Caco-2 (cell line): ENCODE measurements at regions of chr12 and their contacts with region 1.

Region 1: GRCh38 chr12:115456946-115457689 is 773.1 kb upstream of the TBX3 start:
- DNase-seq: peak; percentile 45 to 68
- H3K4me3 ChIP-seq: no peak overlapping the region
- H3K4me3 Mint-ChIP-seq: no peak overlapping the region
- H3K27ac Mint-ChIP-seq: no peak overlapping the region
- H3K4me1 ChIP-seq: 0 out of 2 replicates have a peak, but pooled peaks cover 12% of the 10 kb centered on the region
- H3K4me1 Mint-ChIP-seq: peaks cover 12% of the 10 kb centered on the region
- H3K27me3 ChIP-seq: no peaks in the 10 kb centered on the region
- H3K27me3 Mint-ChIP-seq: no peaks in the 10 kb centered on the region
- CTCF ChIP-seq: peak in 1 of 2 experiments; percentile 38

Region 2: GRCh38 chr12:115362339-115362976 is 94.7 kb before region 1 on chr12:
- CTCF ChIA-PET with region 1: no interaction called
- POLR2A ChIA-PET with region 1: no interaction called
- intact Hi-C with region 1: no loop called
- DNase-seq: no peak
- H3K4me3 ChIP-seq: no peak overlapping the region
- H3K4me3 Mint-ChIP-seq: no peak overlapping the region
- H3K27ac Mint-ChIP-seq: no peak overlapping the region
- H3K4me1 ChIP-seq: 0 out of 2 replicates have a peak, but pooled peaks cover 2% of the 10 kb centered on the region
- H3K4me1 Mint-ChIP-seq: no peaks in the 10 kb centered on the region
- H3K27me3 ChIP-seq: no peaks in the 10 kb centered on the region
- H3K27me3 Mint-ChIP-seq: no peaks in the 10 kb centered on the region
- CTCF ChIP-seq: peak in 1 of 2 experiments; percentile 3

Region 3: GRCh38 chr12:115474539-115475353 is 17.6 kb after region 1 on chr12:
- CTCF ChIA-PET with region 1: interaction called, 4 read pairs
- POLR2A ChIA-PET with region 1: no interaction called
- intact Hi-C with region 1: loop called (anchors 2 kb)
- DNase-seq: peak; percentile 72 to 93
- H3K4me3 ChIP-seq: no peak overlapping the region
- H3K4me3 Mint-ChIP-seq: peak overlapping the region; percentile 28
- H3K27ac Mint-ChIP-seq: no peak overlapping the region
- H3K4me1 ChIP-seq: peaks cover 28% of the 10 kb centered on the region
- H3K4me1 Mint-ChIP-seq: peaks cover 15% of the 10 kb centered on the region
- H3K27me3 ChIP-seq: no peaks in the 10 kb centered on the region
- H3K27me3 Mint-ChIP-seq: no peaks in the 10 kb centered on the region
- CTCF ChIP-seq: no peak

Region 4: DNA sequence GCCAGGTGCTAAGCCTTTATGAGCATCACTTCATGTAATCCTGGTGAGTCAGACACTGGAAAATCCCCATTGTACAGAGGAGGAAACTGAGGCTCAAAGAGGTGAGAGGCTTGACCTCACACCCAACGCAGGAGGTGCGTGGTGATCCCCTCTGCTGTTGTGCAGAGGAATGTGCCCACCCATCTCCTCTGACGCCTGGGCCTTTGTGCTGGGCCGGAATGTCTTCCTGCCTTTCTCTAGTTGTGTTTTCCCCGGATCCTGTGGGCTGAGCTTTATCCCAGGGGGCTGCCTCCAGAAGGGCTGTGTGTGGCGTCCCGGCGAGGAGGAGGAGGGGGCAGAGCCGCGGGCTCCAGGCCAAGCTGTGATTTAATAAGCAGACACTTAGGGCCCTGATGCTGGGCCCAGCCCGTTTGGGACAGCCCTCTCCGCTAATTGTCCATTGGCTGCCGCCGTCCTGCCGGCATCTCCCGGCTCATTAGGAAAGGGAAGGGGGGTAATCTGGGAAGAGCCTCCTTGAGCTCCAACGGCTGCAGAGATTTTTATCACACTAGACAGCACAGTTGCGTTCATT is 166.7 kb after region 1 on chr12:
- CTCF ChIA-PET with region 1: no interaction called
- POLR2A ChIA-PET with region 1: no interaction called
- intact Hi-C with region 1: no loop called
- DNase-seq: no peak
- H3K4me3 ChIP-seq: no peak overlapping the region
- H3K4me3 Mint-ChIP-seq: no peak overlapping the region
- H3K27ac Mint-ChIP-seq: no peak overlapping the region
- H3K4me1 ChIP-seq: no peaks in the 10 kb centered on the region
- H3K4me1 Mint-ChIP-seq: no peaks in the 10 kb centered on the region
- H3K27me3 ChIP-seq: no peaks in the 10 kb centered on the region
- H3K27me3 Mint-ChIP-seq: no peaks in the 10 kb centered on the region
- CTCF ChIP-seq: no peak

Region 5: GRCh38 chr12:116662612-116663144 is 1205.6 kb after region 1 on chr12:
- CTCF ChIA-PET with region 1: no interaction called
- POLR2A ChIA-PET with region 1: no interaction called
- intact Hi-C with region 1: loop called (anchors 5 kb)
- DNase-seq: peak; percentile 64 to 74
- H3K4me3 ChIP-seq: peak overlapping the region; percentile 56
- H3K4me3 Mint-ChIP-seq: peak overlapping the region; percentile 92
- H3K27ac Mint-ChIP-seq: peak overlapping the region; percentile 75
- H3K4me1 ChIP-seq: peaks cover 38% of the 10 kb centered on the region
- H3K4me1 Mint-ChIP-seq: peaks cover 33% of the 10 kb centered on the region
- H3K27me3 ChIP-seq: no peaks in the 10 kb centered on the region
- H3K27me3 Mint-ChIP-seq: no peaks in the 10 kb centered on the region
- CTCF ChIP-seq: peak in 1 of 2 experiments; percentile 9

Region 6: DNA sequence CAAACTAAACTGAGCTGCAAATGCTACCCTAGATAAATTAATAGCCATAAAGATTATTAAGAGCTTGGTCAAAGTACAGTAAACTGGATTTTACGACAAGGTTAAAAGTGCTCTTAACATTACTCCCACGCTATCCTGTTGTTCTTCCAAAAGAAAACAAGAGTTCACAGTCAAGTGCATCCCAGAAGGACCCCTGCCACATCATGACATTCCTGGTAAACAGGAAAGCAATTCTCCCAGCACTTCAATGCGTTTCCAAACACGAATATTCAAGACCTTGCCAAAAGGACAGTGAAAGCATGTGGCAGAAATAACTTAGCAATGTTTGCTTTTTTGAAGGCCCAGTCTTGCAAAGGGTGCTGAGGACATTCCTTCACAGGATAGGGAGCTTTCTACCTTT is 1269.6 kb after region 1 on chr12:
- CTCF ChIA-PET with region 1: no interaction called
- POLR2A ChIA-PET with region 1: no interaction called
- intact Hi-C with region 1: no loop called
- DNase-seq: no peak
- H3K4me3 ChIP-seq: no peak overlapping the region
- H3K4me3 Mint-ChIP-seq: no peak overlapping the region
- H3K27ac Mint-ChIP-seq: no peak overlapping the region
- H3K4me1 ChIP-seq: peaks cover 22% of the 10 kb centered on the region
- H3K4me1 Mint-ChIP-seq: peaks cover 23% of the 10 kb centered on the region
- H3K27me3 ChIP-seq: no peaks in the 10 kb centered on the region
- H3K27me3 Mint-ChIP-seq: no peaks in the 10 kb centered on the region
- CTCF ChIP-seq: no peak